ENCODE measurements at regions of chr20 and their contacts with region 1.

Region 1: GRCh38 chr20:10673988-10674711 is at the start of gene JAG1:
- DNase-seq: peak; percentile 97 to 98
- ATAC-seq: peak; percentile 90
- H3K4me3 ChIP-seq: peak within 1 kb of the TSS; percentile 93 to 97
- H3K27ac ChIP-seq: peak within 1 kb of the TSS; percentile 95 to 97
- H3K4me1 ChIP-seq: peaks cover 0 to 2% of the 10 kb centered on the region in 2 donors
- H3K27me3 ChIP-seq: no peaks in the 10 kb centered on the region
- total RNA-seq, gene JAG1: 133 to 226 TPM

Region 2: DNA sequence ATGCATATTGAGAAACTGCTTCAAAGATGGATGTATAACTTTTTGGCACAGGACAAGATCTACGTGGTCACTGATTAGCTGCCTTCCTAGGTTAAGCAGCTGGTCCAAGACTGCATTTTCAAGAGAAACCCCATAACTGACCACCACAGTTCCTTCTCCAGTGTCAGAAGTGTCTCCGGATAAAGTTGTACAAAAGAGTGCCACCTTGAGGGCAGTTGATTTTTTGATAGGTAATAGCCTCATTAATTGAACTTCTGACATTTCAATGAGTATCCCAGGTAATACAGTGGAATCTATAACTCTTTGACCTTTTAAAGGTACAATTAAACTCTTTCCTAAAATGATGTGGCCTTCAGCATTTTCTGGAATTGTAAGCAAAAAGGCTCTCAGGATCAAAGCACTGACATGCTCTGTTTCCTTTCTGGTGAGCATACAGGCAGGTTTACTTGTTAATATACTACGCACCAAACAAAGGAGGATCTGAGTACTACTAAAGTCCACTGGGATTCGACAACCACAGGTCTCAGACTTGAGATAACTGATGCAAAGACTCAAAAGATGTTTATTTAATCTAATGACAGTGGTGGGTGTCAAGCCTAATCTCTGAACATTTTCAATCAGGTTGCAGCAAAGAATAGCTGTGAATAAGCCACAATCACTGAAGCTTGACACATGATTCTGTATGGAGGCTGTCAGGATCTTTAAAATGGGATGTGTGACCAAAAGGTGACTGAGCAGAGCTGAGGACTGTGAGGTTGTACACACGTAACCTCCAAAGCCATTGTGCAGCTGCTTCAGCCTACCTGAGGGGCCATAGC is 261.4 kb before region 1 on chr20:
- intact Hi-C with region 1: no loop called
- DNase-seq: no peak
- ATAC-seq: no peak
- H3K4me3 ChIP-seq: no peak overlapping the region
- H3K27ac ChIP-seq: no peak overlapping the region
- H3K4me1 ChIP-seq: peaks cover 0 to 3% of the 10 kb centered on the region in 2 donors
- H3K27me3 ChIP-seq: no peaks in the 10 kb centered on the region

Region 3: GRCh38 chr20:10469599-10469998 is 204.6 kb before region 1 on chr20:
- intact Hi-C with region 1: loop called (anchors 5 kb)
- DNase-seq: peak in 1 of 2 donors; percentile 69
- ATAC-seq: peak; percentile 84
- H3K4me3 ChIP-seq: no peak overlapping the region
- H3K27ac ChIP-seq: peak overlapping the region in 1 of 2 donors; percentile 13
- H3K4me1 ChIP-seq: peaks cover 5 to 8% of the 10 kb centered on the region in 2 donors
- H3K27me3 ChIP-seq: no peaks in the 10 kb centered on the region

Region 4: GRCh38 chr20:10636326-10636818 is 37.8 kb before region 1 on chr20:
- intact Hi-C with region 1: loop called in 1 of 2 experiments (anchors 5 kb)
- DNase-seq: no peak
- ATAC-seq: peak; percentile 20
- H3K4me3 ChIP-seq: no peak overlapping the region
- H3K27ac ChIP-seq: peak overlapping the region; percentile 80 to 100
- H3K4me1 ChIP-seq: peaks cover 8 to 9% of the 10 kb centered on the region in 2 donors
- H3K27me3 ChIP-seq: no peaks in the 10 kb centered on the region

Region 5: DNA sequence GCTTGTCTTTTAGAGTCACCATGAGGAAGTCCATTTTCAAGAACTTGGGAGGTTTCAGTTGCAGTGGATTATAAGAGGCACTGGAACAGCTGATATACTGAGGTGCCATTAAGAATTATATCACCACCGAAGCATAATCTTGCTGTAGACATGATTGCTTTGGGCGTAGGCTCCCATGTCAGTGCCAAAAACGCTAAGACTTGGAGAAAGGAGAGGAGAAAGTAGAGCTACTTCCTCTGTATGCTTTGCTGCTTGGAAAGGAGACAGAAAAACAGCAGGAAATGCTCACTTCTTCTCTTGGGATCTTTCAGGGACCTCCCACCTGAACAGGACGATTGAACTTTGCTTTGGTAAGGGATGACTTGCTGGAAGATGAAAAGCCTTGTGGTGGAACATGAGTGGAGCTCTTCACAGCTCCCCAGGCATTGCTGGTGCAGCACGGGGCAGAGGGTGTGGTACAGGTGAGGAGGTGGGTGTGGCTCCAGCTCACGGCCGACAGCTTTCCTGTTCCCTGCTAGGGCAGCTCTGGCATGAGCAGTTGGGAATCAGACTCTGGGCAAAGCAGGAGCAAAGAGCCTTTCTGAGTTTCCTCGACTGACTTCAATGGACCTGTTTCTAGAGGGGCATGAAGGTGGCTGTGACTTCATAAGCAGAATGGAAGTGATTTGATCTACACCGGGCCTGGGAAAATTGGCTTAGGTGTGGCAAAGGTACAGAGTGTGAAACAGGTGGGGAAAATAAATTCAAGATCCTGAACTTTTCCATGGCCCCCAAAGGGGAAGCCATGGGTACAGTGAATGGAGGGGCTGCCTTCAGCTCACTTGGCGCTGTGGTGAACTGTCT is 190.1 kb after region 1 on chr20:
- intact Hi-C with region 1: loop called (anchors 5 to 10 kb)
- DNase-seq: peak in 1 of 2 donors; percentile 55
- ATAC-seq: peak; percentile 50
- H3K4me3 ChIP-seq: peak overlapping the region in 1 of 2 donors; percentile 24
- H3K27ac ChIP-seq: peak overlapping the region; percentile 39 to 76
- H3K4me1 ChIP-seq: peaks cover 5 to 8% of the 10 kb centered on the region in 2 donors
- H3K27me3 ChIP-seq: no peaks in the 10 kb centered on the region

Region 6: DNA sequence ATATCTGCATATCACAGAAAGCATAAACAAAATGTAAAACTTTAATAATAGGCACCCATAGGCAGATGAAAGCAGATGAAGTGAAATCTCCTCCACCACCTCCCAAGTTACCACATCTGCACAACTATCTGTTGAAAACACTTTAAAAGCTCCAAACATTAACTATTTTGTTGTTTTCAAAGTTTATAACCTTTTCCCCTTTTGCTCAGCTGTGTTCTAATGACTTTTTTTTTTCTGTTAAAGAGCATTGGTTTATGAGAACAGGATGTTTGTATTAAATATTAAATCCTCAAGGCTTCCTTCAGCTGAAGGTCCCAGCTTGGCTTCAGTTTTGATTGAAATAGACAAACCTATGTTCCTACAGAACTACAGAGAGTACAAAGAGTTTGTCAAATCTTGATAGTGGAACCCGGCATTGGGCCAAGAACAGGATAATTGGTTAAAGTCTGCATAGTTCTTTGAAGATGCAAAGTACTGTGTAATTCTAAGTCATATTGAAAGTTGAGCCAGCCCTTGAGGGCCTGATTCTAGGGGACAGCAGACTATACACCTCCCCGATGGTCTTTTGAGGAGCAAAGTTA is 254.8 kb after region 1 on chr20:
- intact Hi-C with region 1: no loop called
- DNase-seq: no peak
- ATAC-seq: no peak
- H3K4me3 ChIP-seq: no peak overlapping the region
- H3K27ac ChIP-seq: no peak overlapping the region
- H3K4me1 ChIP-seq: no peaks in the 10 kb centered on the region
- H3K27me3 ChIP-seq: no peaks in the 10 kb centered on the region

Region 7: GRCh38 chr20:10982692-10983091 is 308.5 kb after region 1 on chr20:
- intact Hi-C with region 1: loop called in 1 of 2 experiments (anchors 5 kb)
- DNase-seq: peak; percentile 77 to 78
- ATAC-seq: peak; percentile 76
- H3K4me3 ChIP-seq: peak overlapping the region in 1 of 2 donors; percentile 28
- H3K27ac ChIP-seq: peak overlapping the region in 1 of 2 donors; percentile 14
- H3K4me1 ChIP-seq: peaks cover 8% of the 10 kb centered on the region in 2 donors
- H3K27me3 ChIP-seq: no peaks in the 10 kb centered on the region

Region 8: GRCh38 chr20:11267131-11267761 is 593.1 kb after region 1 on chr20:
- intact Hi-C with region 1: loop called (anchors 2 to 10 kb)
- DNase-seq: peak in 1 of 2 donors; percentile 51
- ATAC-seq: peak; percentile 69
- H3K4me3 ChIP-seq: no peak overlapping the region
- H3K27ac ChIP-seq: no peak overlapping the region
- H3K4me1 ChIP-seq: no peaks in the 10 kb centered on the region
- H3K27me3 ChIP-seq: no peaks in the 10 kb centered on the region

Region 9: GRCh38 chr20:11544029-11544678 is 870.0 kb after region 1 on chr20:
- intact Hi-C with region 1: loop called (anchors 10 kb)
- DNase-seq: no peak
- ATAC-seq: peak; percentile 78
- H3K4me3 ChIP-seq: no peak overlapping the region
- H3K27ac ChIP-seq: no peak overlapping the region
- H3K4me1 ChIP-seq: no peaks in the 10 kb centered on the region
- H3K27me3 ChIP-seq: no peaks in the 10 kb centered on the region